ENCODE measurements at regions of chr6 and their contacts with region 1.

Region 1: GRCh38 chr6:157379656-157380454 is 1.1 kb upstream of the ZDHHC14 start:
- DNase-seq: peak; percentile 84 to 99 (median 95)

Region 2: GRCh38 chr6:157434349-157435033 is 54.6 kb after region 1 on chr6:
- intact Hi-C with region 1: loop called (anchors 5 kb)
- DNase-seq: peak in 20 of 42 donors; percentile 22 to 72 (median 46)

Measured in head of caudate nucleus (tissue), 42 donors.